Dorsolateral prefrontal cortex (tissue), 120 donors: ENCODE measurements at regions of chr19 and their contacts with region 1.

Region 1: GRCh38 chr19:984165-984967 is at the start of gene WDR18:
- DNase-seq: peak; percentile 92 to 97 (median 95)
- H3K4me3 ChIP-seq: peak within 1 kb of the TSS; percentile 59 to 99 (median 91)
- H3K27ac ChIP-seq: peak within 1 kb of the TSS; percentile 63 to 99 (median 87)
- H3K27me3 ChIP-seq: peaks cover 0 to 1% (median 0%) of the 10 kb centered on the region in 45 donors
- CTCF ChIP-seq: peak in 51 of 56 donors; percentile 14 to 71 (median 44)
- total RNA-seq, gene WDR18: 20.6 to 51.2 (median 30.3) TPM

Region 2: GRCh38 chr19:680287-681028 is 303.9 kb before region 1 on chr19:
- intact Hi-C with region 1: loop called in 1 of 2 experiments (anchors 10 kb)
- DNase-seq: peak; percentile 99 to 100 (median 99)
- H3K4me3 ChIP-seq: peak overlapping the region; percentile 45 to 98 (median 77)
- H3K27ac ChIP-seq: peak overlapping the region in 58 of 59 donors; percentile 38 to 99 (median 94)
- H3K27me3 ChIP-seq: peaks cover 0 to 7% (median 0%) of the 10 kb centered on the region in 45 donors
- CTCF ChIP-seq: peak in 51 of 56 donors; percentile 10 to 73 (median 47)

Region 3: DNA sequence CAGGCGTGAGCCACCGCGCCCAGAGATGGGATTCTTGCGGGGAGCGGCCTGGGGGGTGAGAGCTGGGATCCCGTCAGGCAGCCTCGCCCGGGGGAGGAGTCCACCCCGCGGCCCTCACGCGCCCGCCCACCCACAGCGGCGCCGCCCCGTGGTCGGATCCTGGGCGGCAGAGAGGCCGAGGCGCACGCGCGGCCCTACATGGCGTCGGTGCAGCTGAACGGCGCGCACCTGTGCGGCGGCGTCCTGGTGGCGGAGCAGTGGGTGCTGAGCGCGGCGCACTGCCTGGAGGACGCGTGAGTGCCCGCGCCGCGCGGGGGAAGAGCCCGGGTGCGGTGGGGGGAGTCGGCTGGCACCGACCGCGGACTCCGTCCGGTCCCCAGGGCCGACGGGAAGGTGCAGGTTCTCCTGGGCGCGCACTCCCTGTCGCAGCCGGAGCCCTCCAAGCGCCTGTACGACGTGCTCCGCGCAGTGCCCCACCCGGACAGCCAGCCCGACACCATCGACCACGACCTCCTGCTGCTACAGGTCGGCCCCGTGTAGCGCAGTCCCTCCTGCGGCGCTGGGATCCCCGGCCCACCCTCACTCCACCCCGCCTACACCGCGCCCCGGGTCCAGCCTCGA is 123.8 kb before region 1 on chr19:
- intact Hi-C with region 1: loop called (anchors 2 to 5 kb)
- DNase-seq: no peak
- H3K4me3 ChIP-seq: peak overlapping the region in 48 of 59 donors; percentile 7 to 53 (median 32)
- H3K27ac ChIP-seq: no peak overlapping the region
- H3K27me3 ChIP-seq: peaks cover 0 to 41% (median 22%) of the 10 kb centered on the region in 45 donors
- CTCF ChIP-seq: peak in 3 of 56 donors; percentile 9 to 18 (median 16)

Region 4: DNA sequence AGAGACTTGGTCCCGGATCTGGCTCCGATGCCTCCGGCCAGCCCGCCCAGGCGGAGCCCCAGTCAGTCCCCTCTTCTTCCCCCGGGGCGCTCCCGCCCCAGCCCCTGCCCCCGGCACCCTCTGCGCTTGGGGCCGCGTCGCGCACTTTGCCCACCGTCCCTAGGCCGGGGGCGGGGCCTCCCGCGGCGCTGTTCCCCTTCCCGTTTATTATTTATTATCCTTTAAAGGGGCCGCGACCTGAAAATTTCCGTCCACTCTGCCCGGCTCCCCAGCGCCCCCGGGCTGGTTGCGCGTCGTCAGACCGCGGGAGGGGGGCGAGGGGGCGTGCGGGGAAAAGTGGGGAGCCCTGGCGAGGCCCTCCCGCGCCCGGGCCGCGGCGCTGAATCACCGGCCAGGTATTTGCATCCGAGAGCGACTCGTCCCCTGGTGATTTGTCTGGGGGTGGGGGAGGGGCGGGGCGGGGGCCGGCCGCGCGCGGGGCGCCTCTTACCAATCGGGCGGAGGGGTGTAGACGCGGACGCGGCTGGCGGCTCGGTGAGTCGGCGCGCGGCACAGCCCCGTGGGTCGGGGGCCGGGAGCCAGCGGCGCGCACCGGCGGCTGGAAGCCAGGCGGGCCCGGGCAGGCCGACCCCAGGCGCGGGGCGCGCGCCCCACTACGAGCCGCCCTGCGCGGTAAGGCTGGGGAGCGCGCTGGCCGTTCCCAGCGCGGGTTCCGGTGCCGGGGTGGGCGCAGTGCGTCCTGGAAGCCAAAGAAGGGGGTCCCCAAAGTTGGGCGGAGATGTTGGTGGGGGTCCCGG is 58.6 kb before region 1 on chr19 and contains the start of gene ARID3A:
- intact Hi-C with region 1: loop called (anchors 1 kb)
- DNase-seq: peak; percentile 69 to 86 (median 76)
- H3K4me3 ChIP-seq: peak within 1 kb of the TSS; percentile 65 to 95 (median 82)
- H3K27ac ChIP-seq: peak within 1 kb of the TSS in 57 of 59 donors; percentile 29 to 88 (median 77)
- H3K27me3 ChIP-seq: peaks cover 0 to 8% (median 6%) of the 10 kb centered on the region in 45 donors
- CTCF ChIP-seq: peak in 23 of 56 donors; percentile 4 to 51 (median 15)
- total RNA-seq, gene ARID3A: 3.8 to 17.6 (median 8.7) TPM

Region 5: GRCh38 chr19:940591-941291 is 43.6 kb before region 1 on chr19:
- intact Hi-C with region 1: no loop called
- DNase-seq: peak in 9 of 10 donors; percentile 44 to 84 (median 75)
- H3K4me3 ChIP-seq: peak overlapping the region; percentile 21 to 72 (median 55)
- H3K27ac ChIP-seq: peak overlapping the region; percentile 18 to 95 (median 85)
- H3K27me3 ChIP-seq: no peaks in the 10 kb centered on the region
- CTCF ChIP-seq: peak in 23 of 56 donors; percentile 5 to 53 (median 30)

Region 6: DNA sequence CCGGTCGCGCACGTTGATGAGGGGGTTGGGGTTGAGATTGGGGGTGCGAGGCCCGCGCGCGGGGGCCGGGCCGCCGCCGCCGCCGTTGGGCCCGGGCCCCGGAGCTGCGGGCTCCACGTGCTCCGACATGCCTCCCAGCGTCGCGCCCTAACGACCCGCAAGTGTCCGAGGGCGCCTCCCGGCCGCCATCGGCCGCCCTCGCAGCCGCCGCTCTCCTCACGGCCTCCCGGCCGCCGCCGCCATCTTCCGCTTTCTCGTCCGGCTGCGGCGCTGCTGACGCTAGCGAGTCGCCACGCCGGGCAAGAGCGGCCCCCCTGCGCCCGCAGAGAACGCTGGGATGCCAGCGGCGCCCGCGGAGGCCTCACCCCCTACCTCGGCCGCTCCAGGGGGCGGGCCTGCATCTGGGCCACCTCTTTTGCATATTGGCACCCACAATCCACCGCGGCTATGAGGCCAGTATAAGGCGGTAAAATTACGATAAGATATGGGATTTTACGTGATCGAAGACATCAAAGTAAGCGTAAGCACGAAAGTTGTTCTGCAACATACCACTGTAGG is 36.6 kb after region 1 on chr19 and contains the start of gene TMEM259:
- intact Hi-C with region 1: loop called (anchors 1 to 2 kb)
- DNase-seq: peak; percentile 96 to 99 (median 98)
- H3K4me3 ChIP-seq: peak within 1 kb of the TSS; percentile 43 to 95 (median 84)
- H3K27ac ChIP-seq: peak within 1 kb of the TSS; percentile 54 to 99 (median 95)
- H3K27me3 ChIP-seq: peaks cover 0 to 17% (median 4%) of the 10 kb centered on the region in 45 donors
- CTCF ChIP-seq: peak in 43 of 56 donors; percentile 4 to 61 (median 40)
- total RNA-seq, gene TMEM259: 98.2 to 236 (median 132) TPM

Region 7: GRCh38 chr19:1168877-1169791 is 184.8 kb after region 1 on chr19:
- intact Hi-C with region 1: no loop called
- DNase-seq: peak in 2 of 10 donors; percentile 50
- H3K4me3 ChIP-seq: peak overlapping the region in 45 of 59 donors; percentile 4 to 58 (median 34)
- H3K27ac ChIP-seq: peak overlapping the region in 58 of 59 donors; percentile 4 to 87 (median 74)
- H3K27me3 ChIP-seq: no peaks in the 10 kb centered on the region
- CTCF ChIP-seq: no peak

Region 8: GRCh38 chr19:1183534-1184172 is 199.3 kb after region 1 on chr19:
- intact Hi-C with region 1: no loop called
- DNase-seq: no peak
- H3K4me3 ChIP-seq: no peak overlapping the region
- H3K27ac ChIP-seq: no peak overlapping the region
- H3K27me3 ChIP-seq: no peaks in the 10 kb centered on the region
- CTCF ChIP-seq: no peak